Activated CD4-positive, alpha-beta memory T cell treated with anti-CD3 and anti-CD28 coated beads for 36 hours (primary cell): ENCODE measurements at regions of chr3 and their contacts with region 1.

Region 1: GRCh38 chr3:58188173-58188564 is 22.6 kb downstream of the DNASE1L3 start:
- DNase-seq: no peak
- H3K4me3 Mint-ChIP-seq: no peak overlapping the region
- H3K27ac Mint-ChIP-seq: no peak overlapping the region
- H3K4me1 Mint-ChIP-seq: no peaks in the 10 kb centered on the region
- H3K27me3 Mint-ChIP-seq: no peaks in the 10 kb centered on the region

Region 2: GRCh38 chr3:58177747-58178527 is 10.2 kb before region 1 on chr3:
- CTCF ChIA-PET with region 1: interaction called, 20 read pairs
- POLR2A ChIA-PET with region 1: no interaction called
- intact Hi-C with region 1: no loop called
- DNase-seq: peak; percentile 92
- H3K4me3 Mint-ChIP-seq: peak overlapping the region; percentile 39
- H3K27ac Mint-ChIP-seq: no peak overlapping the region
- H3K4me1 Mint-ChIP-seq: peaks cover 11% of the 10 kb centered on the region
- H3K27me3 Mint-ChIP-seq: no peaks in the 10 kb centered on the region

Region 3: GRCh38 chr3:58206406-58207011 is 18.3 kb after region 1 on chr3:
- CTCF ChIA-PET with region 1: interaction called, 40 read pairs
- POLR2A ChIA-PET with region 1: no interaction called
- intact Hi-C with region 1: no loop called
- DNase-seq: peak; percentile 63
- H3K4me3 Mint-ChIP-seq: no peak overlapping the region
- H3K27ac Mint-ChIP-seq: no peak overlapping the region
- H3K4me1 Mint-ChIP-seq: peaks cover 13% of the 10 kb centered on the region
- H3K27me3 Mint-ChIP-seq: peaks cover 18% of the 10 kb centered on the region

Region 4: GRCh38 chr3:58299839-58300516 is 111.8 kb after region 1 on chr3:
- CTCF ChIA-PET with region 1: interaction called, 50 read pairs
- POLR2A ChIA-PET with region 1: no interaction called
- intact Hi-C with region 1: loop called (anchors 1 kb)
- DNase-seq: no peak
- H3K4me3 Mint-ChIP-seq: no peak overlapping the region
- H3K27ac Mint-ChIP-seq: no peak overlapping the region
- H3K4me1 Mint-ChIP-seq: no peaks in the 10 kb centered on the region
- H3K27me3 Mint-ChIP-seq: peaks cover 19% of the 10 kb centered on the region

Region 5: DNA sequence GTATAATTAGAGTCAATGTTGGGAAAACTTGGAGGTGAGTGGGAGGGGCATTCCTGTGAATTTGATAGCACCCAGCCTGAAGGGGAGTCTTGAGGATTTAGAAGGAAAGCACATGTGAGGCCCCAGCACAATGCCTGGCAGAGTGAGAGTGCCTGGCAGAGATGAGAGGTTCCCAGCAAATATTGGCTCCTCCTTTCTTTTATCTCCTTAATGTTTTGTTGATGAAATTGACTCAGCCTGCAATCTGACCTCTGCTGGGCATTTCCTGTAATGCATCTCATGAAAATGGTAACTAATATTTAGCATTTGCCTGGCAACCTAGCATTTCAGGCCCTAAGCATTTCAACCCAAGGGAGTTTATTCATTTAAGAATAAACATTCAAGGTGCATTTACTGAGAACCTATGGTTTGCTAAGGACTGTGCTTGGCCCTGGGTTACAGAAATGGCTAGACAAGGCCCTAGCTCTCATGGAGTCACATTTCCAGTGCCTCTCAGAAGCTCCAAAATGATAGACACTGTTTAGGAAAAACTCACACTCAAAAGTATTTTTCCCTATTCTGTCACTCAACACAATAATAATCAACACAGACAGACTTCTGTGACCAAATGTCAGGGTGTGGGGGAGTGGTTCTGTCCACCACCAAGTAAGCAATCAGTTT is 226.5 kb after region 1 on chr3:
- CTCF ChIA-PET with region 1: interaction called, 11 read pairs
- POLR2A ChIA-PET with region 1: no interaction called
- intact Hi-C with region 1: loop called (anchors 10 kb)
- DNase-seq: peak; percentile 48
- H3K4me3 Mint-ChIP-seq: no peak overlapping the region
- H3K27ac Mint-ChIP-seq: no peak overlapping the region
- H3K4me1 Mint-ChIP-seq: peaks cover 3% of the 10 kb centered on the region
- H3K27me3 Mint-ChIP-seq: no peaks in the 10 kb centered on the region